Dorsolateral prefrontal cortex (tissue), 120 donors: ENCODE measurements at regions of chr20 and their contacts with region 1.

Region 1: DNA sequence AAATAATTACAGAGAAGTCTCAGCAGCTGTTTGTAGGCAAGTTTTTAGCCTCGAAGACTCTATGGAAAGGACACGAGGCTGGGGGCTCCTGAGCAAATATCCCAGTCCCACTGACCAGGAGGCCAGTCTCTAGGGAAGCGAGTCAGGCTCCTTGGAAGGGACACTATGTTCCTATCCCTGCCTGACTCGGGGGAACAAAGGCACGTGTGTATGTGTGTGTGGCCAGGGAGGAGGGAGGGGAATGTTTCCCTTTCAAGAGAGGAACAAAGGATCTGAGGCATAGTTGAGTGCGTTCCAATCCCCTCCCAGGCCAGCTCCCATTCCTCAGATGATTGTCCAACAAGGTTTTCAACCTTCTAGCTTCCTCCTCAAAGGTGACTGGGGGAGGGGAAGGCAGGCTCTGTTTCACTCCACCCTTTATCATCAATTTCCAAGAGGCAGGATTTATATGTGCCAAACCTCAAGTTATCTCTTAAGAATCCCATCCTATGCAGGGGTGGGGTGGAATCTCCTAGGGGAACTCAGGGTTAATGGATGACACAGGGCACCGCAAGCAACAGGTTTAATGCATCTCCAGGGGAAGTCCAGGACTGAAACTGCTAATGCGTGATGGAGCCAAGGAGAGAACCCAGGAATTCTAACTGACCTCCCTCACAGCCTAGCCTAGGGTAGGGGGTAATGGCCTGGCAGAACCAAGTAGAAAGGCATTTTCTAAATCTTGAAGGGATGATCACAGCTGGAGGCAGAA is 9.9 kb downstream of the BCL2L1 start:
- DNase-seq: peak in 9 of 10 donors; percentile 63 to 94 (median 86)
- H3K4me3 ChIP-seq: peak overlapping the region in 58 of 59 donors; percentile 2 to 90 (median 37)
- H3K27ac ChIP-seq: peak overlapping the region; percentile 80 to 100 (median 99)
- H3K27me3 ChIP-seq: no peaks in the 10 kb centered on the region
- CTCF ChIP-seq: peak in 5 of 56 donors; percentile 6 to 23 (median 14)

Region 2: DNA sequence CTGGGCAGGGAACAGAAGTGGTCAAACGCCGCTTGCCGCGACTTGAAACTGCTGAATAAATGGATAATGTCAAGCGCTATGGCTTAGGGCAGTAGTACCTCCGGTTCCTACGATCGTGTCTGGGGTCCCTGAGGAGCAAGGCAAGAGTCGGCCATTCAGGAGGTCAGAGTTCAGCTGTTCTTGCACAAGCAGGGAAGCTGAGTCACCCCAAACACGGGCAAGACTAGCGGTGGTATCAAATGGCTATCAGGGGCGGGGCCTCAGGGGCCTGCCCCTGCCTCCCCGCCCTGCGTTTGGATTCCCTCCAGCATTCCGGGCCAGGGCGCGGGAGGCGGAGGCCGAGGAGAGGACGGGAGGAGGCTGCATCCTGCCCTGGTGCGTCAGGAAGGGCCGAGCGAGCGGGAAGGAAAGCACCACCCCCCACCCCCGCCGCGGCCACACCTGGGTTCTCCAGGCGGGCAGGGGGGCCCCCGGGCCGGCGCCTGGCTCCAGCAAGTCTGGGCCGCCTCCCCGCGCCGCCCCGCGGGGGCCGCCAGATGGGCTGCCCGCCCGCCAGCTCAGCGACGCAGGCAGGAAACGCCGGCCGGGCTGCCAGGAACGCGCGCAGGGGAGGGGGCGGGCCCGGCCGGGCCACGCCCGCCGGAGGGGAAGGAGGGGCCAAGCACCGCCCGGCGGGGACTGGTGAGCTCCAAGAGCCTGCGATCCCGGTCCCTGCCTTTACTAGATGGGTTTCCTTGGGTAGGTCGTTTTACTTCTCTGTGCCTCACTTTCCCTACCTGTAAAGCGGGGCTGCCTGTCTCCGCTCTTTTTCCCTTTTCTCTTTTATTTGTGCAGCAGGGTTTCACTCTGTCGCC is 139.8 kb before region 1 on chr20:
- intact Hi-C with region 1: no loop called
- DNase-seq: peak; percentile 67 to 91 (median 84)
- H3K4me3 ChIP-seq: peak overlapping the region; percentile 21 to 76 (median 63)
- H3K27ac ChIP-seq: peak overlapping the region; percentile 78 to 99 (median 94)
- H3K27me3 ChIP-seq: no peaks in the 10 kb centered on the region
- CTCF ChIP-seq: peak in 16 of 56 donors; percentile 0 to 55 (median 18)

Region 3: DNA sequence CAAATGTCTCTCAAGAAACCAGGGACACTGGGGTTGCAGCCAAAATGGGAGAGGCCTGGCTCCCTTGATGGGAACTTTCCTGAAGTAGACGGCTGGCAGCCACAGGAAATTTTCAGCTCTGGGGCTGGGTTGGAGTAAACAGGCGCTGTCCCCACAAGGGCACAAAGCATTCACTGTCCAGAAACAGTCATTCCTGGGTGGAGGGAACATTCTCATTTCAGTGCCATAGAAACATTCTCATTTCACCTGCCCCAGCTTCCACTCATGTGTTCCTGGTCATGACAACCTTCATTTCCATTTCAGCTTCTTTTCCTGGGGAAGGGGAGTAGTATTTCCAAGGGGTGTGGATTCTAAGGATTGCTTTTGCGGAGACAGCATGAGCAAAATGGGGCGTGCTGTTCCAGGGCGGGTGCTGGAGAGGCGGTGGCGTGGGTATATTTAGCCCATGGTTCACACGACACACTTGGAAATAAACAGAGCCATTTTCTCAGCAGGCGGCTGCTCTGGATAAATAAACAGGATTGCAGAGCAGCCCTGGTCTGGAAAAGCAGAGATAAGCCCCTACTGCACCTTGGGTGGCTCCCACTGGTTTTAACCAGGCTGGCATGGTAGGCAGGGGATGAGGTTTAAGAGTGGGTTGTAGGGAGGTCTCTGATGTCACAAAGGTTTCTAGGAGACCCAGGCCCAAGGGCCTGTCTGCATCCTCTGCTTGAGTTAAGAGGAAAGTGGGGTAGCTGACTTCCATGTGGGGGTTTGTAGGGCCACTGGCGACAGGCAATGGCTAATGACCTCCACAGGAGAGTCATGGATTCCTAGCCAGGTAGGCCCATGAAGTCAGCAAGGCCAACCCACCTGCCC is 42.1 kb before region 1 on chr20:
- intact Hi-C with region 1: loop called in 1 of 2 experiments (anchors 2 kb)
- DNase-seq: peak; percentile 51 to 90 (median 86)
- H3K4me3 ChIP-seq: peak overlapping the region in 44 of 59 donors; percentile 1 to 48 (median 22)
- H3K27ac ChIP-seq: peak overlapping the region; percentile 95 to 100 (median 99)
- H3K27me3 ChIP-seq: no peaks in the 10 kb centered on the region
- CTCF ChIP-seq: peak in 13 of 56 donors; percentile 2 to 34 (median 16)